ENCODE measurements at regions of chr1 and their contacts with region 1.

Region 1: GRCh38 chr1:53889304-53890298 is at the start of gene YIPF1:
- DNase-seq: peak; percentile 68 to 96
- H3K4me3 ChIP-seq: peak within 1 kb of the TSS; percentile 79 to 83
- H3K27ac ChIP-seq: peak within 1 kb of the TSS; percentile 71 to 87
- H3K4me1 ChIP-seq: peaks cover 7 to 9% of the 10 kb centered on the region in 2 donors
- H3K27me3 ChIP-seq: no peaks in the 10 kb centered on the region
- CTCF ChIP-seq: no peak
- total RNA-seq, gene YIPF1: 17.0 TPM

Region 2: GRCh38 chr1:53837924-53838652 is 51.5 kb before region 1 on chr1 and contains the start of gene NDC1:
- intact Hi-C with region 1: loop called (anchors 5 kb)
- DNase-seq: peak; percentile 63 to 93
- H3K4me3 ChIP-seq: peak within 1 kb of the TSS; percentile 53 to 83
- H3K27ac ChIP-seq: peak within 1 kb of the TSS; percentile 90 to 97
- H3K4me1 ChIP-seq: peaks cover 0 to 9% of the 10 kb centered on the region in 2 donors
- H3K27me3 ChIP-seq: no peaks in the 10 kb centered on the region
- CTCF ChIP-seq: peak in 1 of 3 experiments; percentile 35
- total RNA-seq, gene NDC1: 9.3 TPM

Region 3: GRCh38 chr1:54188291-54188690 is 298.7 kb after region 1 on chr1:
- intact Hi-C with region 1: no loop called
- DNase-seq: no peak
- H3K4me3 ChIP-seq: no peak overlapping the region
- H3K27ac ChIP-seq: no peak overlapping the region
- H3K4me1 ChIP-seq: no peaks in the 10 kb centered on the region
- H3K27me3 ChIP-seq: no peaks in the 10 kb centered on the region
- CTCF ChIP-seq: no peak

Region 4: DNA sequence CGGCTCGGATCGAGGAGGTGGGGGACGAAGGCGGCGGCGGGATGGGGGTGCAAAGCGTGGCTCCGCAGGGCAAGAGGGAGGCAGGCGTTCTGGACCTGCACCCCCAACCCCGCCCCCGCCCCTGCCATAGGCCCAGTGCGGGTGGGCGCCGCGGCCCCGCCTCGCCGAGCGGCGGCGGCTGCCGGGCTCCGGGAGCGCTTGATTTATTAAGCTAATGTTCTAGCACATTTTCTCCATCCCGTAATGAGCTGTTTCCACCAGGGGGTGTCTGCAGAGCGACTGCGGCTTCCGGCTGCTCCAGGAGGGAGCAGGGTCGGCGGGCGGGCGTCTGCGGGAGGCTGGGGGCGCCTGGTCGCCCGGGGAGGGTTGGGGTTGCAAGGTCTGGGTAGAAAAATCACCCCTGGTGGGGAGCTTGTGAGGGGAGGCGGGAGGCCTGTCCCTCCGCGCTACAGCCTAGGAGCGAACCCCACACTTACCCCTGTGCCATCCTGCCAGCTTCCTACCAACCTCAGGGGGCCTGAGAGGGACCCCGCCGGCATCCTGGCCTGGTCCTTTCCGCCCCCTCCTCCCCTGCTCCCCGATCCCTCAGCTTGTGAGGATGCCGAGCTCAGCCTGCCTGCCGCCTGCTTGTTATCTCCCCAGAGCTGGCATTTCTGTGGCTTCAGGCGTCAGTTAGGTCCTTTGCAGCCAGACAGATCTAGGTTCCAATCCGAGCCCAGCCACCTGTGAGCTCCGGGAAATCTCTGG is 609.9 kb after region 1 on chr1:
- intact Hi-C with region 1: loop called (anchors 10 kb)
- DNase-seq: no peak
- H3K4me3 ChIP-seq: peak overlapping the region; percentile 58 to 70
- H3K27ac ChIP-seq: no peak overlapping the region
- H3K4me1 ChIP-seq: peaks cover 0 to 10% of the 10 kb centered on the region in 2 donors
- H3K27me3 ChIP-seq: no peaks in the 10 kb centered on the region
- CTCF ChIP-seq: peak; percentile 25 to 53 (median 38)